GM12878 (cell line): ENCODE measurements at regions of chr1 and their contacts with region 1.

Region 1: GRCh38 chr1:228825840-228826484 is 90.7 kb downstream of the RHOU start:
- DNase-seq: no peak
- ATAC-seq: peak; percentile 76
- H3K4me3 ChIP-seq: no peak overlapping the region
- H3K27ac ChIP-seq: no peak overlapping the region
- H3K4me1 ChIP-seq: peaks cover 4% of the 10 kb centered on the region
- H3K27me3 ChIP-seq: no peaks in the 10 kb centered on the region
- CTCF ChIP-seq: no peak
- EP300 ChIP-seq: no peak
- POLR2A ChIP-seq: no peak
- RAD21 ChIP-seq: no peak

Region 2: GRCh38 chr1:228837817-228838716 is 12.1 kb after region 1 on chr1:
- CTCF ChIA-PET with region 1: interaction called, 4 read pairs
- POLR2A ChIA-PET with region 1: interaction called, 3 read pairs
- RAD21 ChIA-PET with region 1: interaction called, 6 read pairs
- SMC1A ChIA-PET with region 1: interaction called, 11 read pairs
- in situ Hi-C with region 1: no loop called
- intact Hi-C with region 1: no loop called
- DNase-seq: no peak
- ATAC-seq: peak; percentile 80
- H3K4me3 ChIP-seq: no peak overlapping the region
- H3K27ac ChIP-seq: no peak overlapping the region
- H3K4me1 ChIP-seq: no peaks in the 10 kb centered on the region
- H3K27me3 ChIP-seq: 0 out of 4 replicates have a peak, but pooled peaks cover 2 to 5% of the 10 kb centered on the region in 2 experiments
- CTCF ChIP-seq: no peak
- EP300 ChIP-seq: no peak
- POLR2A ChIP-seq: no peak
- RAD21 ChIP-seq: no peak